Activated B cell treated with CpG ODN at 0.5 μM for 24 hours (primary cell): ENCODE measurements at regions of chr22 and their contacts with region 1.

Region 1: DNA sequence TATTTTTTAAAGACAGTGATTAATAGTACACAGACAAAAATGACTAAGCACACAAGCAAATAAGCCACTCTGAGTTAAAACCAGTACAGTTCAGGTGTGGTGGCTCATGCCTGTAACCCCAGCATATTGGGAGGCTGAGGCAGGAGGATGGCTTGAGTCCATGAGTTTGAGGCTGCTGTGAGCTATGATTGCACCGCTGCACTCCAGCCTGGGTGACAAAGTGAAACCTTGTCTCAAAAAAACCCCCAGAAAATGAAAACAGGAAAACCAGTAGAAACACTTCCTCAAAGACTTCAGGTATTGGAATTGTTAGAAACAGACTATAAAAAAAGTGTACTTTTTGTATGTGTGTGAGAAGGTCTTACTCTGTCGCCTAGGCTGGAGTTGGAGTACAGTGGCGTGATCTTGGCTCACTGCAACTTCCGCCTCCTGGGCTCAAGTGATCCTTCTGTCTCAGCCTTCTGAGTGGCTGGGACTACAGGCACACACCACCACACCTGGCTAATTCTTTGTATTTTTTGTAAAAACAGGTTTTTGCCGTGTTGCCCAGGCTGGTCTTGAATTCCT is 33.0 kb downstream of the PPP6R2 start:
- DNase-seq: no peak
- ATAC-seq: peak; percentile 40
- H3K4me3 Mint-ChIP-seq: peak overlapping the region; percentile 41
- H3K27ac Mint-ChIP-seq: peak overlapping the region; percentile 68
- H3K4me1 Mint-ChIP-seq: peaks cover 17% of the 10 kb centered on the region
- H3K27me3 Mint-ChIP-seq: no peaks in the 10 kb centered on the region
- CTCF ChIP-seq: no peak

Region 2: DNA sequence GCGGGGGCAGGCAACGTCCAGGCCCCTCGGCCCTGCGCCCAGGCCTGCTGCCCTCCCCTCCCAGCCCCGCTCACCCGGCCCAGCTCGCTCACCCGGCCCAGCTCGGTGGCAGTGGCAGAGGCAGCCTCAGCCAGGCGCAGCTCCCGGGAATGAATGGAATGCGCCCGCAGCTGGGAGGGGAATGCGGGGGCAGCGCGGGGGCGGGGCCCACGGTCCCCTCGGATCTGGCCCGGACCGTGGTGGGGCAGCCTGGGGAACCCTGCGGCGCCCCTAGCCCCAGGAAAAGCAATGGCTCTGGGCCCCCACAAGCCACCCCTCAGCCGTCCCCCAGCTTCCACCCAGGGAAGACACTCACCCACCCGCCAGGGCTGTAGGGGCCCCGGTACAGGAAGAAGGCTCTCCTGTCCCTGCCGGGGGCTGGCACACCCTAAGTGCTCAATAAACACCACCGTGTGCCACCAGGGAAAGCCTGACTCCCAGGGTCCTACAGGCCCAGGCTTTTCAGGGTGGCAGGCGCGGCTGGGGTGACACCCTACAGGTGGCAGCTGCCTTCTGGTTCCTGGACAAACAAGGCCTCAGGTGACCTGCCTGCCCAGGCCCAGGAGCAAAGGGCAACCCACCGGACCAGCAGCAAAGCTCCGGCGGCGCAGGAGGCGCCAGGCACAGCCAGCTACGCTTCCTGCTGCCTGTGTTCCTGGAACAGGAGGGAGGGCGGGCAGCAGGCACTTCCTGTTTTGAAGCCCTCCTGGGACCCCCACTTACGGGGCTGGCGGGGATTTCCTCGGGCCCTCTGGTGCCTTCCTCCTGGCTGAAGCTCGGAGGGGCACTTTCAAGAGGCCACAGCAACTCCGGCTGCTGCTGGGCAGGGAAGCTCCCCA is 82.5 kb before region 1 on chr22:
- CTCF ChIA-PET with region 1: no interaction called
- POLR2A ChIA-PET with region 1: no interaction called
- intact Hi-C with region 1: no loop called
- DNase-seq: no peak
- ATAC-seq: peak; percentile 51
- H3K4me3 Mint-ChIP-seq: peak overlapping the region; percentile 56
- H3K27ac Mint-ChIP-seq: no peak overlapping the region
- H3K4me1 Mint-ChIP-seq: peaks cover 47% of the 10 kb centered on the region
- H3K27me3 Mint-ChIP-seq: peaks cover 6% of the 10 kb centered on the region
- CTCF ChIP-seq: no peak

Region 3: GRCh38 chr22:50444663-50445062 is 68.5 kb after region 1 on chr22:
- CTCF ChIA-PET with region 1: no interaction called
- POLR2A ChIA-PET with region 1: interaction called, 12 read pairs
- intact Hi-C with region 1: no loop called
- DNase-seq: no peak
- ATAC-seq: no peak
- H3K4me3 Mint-ChIP-seq: no peak overlapping the region
- H3K27ac Mint-ChIP-seq: peak overlapping the region; percentile 69
- H3K4me1 Mint-ChIP-seq: peaks cover 23% of the 10 kb centered on the region
- H3K27me3 Mint-ChIP-seq: no peaks in the 10 kb centered on the region
- CTCF ChIP-seq: no peak

Region 4: GRCh38 chr22:50576070-50576469 is 199.9 kb after region 1 on chr22:
- CTCF ChIA-PET with region 1: no interaction called
- POLR2A ChIA-PET with region 1: no interaction called
- intact Hi-C with region 1: no loop called
- DNase-seq: no peak
- ATAC-seq: no peak
- H3K4me3 Mint-ChIP-seq: no peak overlapping the region
- H3K27ac Mint-ChIP-seq: no peak overlapping the region
- H3K4me1 Mint-ChIP-seq: peaks cover 9% of the 10 kb centered on the region
- H3K27me3 Mint-ChIP-seq: no peaks in the 10 kb centered on the region
- CTCF ChIP-seq: no peak